Psoas muscle (tissue), 8 donors: ENCODE measurements at regions of chr6 and their contacts with region 1.

Region 1: DNA sequence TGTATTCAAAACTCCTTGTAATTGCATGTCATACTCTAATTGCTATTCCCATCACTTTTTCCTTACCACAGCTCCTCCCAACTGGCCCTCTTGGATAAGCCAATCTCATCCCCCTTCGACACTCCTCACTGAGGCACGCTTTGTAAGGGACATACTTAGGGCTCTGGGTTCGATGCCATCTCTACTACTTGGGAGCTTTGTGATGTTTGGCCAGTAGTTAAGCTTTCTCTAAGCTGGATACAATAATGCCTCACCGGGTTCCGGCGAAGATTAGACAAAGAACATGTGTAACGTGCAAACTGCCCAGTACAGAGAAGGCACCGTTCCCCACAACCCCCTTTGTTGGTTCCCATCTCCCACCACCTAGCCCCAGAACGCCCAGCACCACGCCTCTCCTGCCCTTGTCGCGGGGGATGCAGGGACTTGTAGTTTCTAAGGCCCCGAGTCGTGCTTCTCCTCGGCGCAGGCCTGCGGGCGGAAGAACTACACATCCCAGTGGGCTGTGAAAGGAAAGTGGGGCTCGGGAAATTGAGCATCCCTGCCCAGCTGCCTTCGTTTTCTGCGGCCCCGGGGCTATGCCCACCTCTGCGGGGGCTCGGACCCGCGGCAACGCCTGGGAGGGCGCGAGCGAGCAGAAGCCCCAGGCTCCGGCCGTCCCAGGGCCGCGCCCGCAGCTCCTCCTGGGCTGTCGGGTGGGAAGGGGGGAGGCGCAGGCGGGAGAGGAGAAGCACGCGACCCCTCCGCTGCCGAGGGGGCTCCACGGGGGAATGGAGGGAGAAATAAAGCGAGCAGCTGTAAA is 1.1 kb upstream of the ZDHHC14 start:
- DNase-seq: peak; percentile 91 to 93
- ATAC-seq: peak; percentile 82 to 91 (median 90)
- H3K4me3 ChIP-seq: peak overlapping the region; percentile 96
- H3K27ac ChIP-seq: peak overlapping the region; percentile 94
- H3K4me1 ChIP-seq: peaks cover 29% of the 10 kb centered on the region
- H3K27me3 ChIP-seq: no peaks in the 10 kb centered on the region
- CTCF ChIP-seq: no peak

Region 2: GRCh38 chr6:157323255-157323965 is 56.4 kb before region 1 on chr6 and contains the start of gene TMEM242:
- intact Hi-C with region 1: loop called (anchors 2 to 5 kb)
- DNase-seq: peak; percentile 92 to 95
- ATAC-seq: peak; percentile 92 to 96 (median 94)
- H3K4me3 ChIP-seq: peak within 1 kb of the TSS; percentile 78
- H3K27ac ChIP-seq: peak within 1 kb of the TSS; percentile 99
- H3K4me1 ChIP-seq: peaks cover 38% of the 10 kb centered on the region
- H3K27me3 ChIP-seq: no peaks in the 10 kb centered on the region
- CTCF ChIP-seq: peak; percentile 42
- total RNA-seq, gene TMEM242: 11.0 to 14.7 (median 13.6) TPM

Region 3: DNA sequence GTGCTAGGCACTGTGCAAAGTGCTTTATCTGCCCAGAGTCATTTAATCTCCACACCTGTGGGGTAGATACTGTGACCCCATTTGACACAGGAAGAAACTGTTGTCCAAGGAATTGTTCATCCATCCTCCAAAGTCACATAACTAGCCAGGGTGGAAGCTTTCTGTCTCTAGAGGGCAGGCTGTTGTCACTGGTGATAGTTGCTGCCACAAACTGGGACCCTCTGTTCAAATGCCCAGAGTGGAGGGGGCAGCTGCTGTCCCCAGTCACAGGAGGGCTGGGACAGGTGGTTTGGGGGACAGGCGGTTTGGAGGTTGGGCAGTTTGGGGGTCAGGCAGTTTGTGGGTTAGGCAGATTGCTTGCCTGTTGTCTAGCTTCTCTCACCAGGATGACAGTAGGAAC is 40.4 kb before region 1 on chr6:
- intact Hi-C with region 1: loop called in 1 of 2 experiments (anchors 5 kb)
- DNase-seq: no peak
- ATAC-seq: no peak
- H3K4me3 ChIP-seq: no peak overlapping the region
- H3K27ac ChIP-seq: no peak overlapping the region
- H3K4me1 ChIP-seq: no peaks in the 10 kb centered on the region
- H3K27me3 ChIP-seq: no peaks in the 10 kb centered on the region
- CTCF ChIP-seq: no peak

Region 4: GRCh38 chr6:157535339-157536222 is 155.7 kb after region 1 on chr6:
- intact Hi-C with region 1: loop called in 1 of 2 experiments (anchors 5 kb)
- DNase-seq: no peak
- ATAC-seq: no peak
- H3K4me3 ChIP-seq: no peak overlapping the region
- H3K27ac ChIP-seq: peak overlapping the region; percentile 20
- H3K4me1 ChIP-seq: peaks cover 65% of the 10 kb centered on the region
- H3K27me3 ChIP-seq: no peaks in the 10 kb centered on the region
- CTCF ChIP-seq: no peak

Region 5: DNA sequence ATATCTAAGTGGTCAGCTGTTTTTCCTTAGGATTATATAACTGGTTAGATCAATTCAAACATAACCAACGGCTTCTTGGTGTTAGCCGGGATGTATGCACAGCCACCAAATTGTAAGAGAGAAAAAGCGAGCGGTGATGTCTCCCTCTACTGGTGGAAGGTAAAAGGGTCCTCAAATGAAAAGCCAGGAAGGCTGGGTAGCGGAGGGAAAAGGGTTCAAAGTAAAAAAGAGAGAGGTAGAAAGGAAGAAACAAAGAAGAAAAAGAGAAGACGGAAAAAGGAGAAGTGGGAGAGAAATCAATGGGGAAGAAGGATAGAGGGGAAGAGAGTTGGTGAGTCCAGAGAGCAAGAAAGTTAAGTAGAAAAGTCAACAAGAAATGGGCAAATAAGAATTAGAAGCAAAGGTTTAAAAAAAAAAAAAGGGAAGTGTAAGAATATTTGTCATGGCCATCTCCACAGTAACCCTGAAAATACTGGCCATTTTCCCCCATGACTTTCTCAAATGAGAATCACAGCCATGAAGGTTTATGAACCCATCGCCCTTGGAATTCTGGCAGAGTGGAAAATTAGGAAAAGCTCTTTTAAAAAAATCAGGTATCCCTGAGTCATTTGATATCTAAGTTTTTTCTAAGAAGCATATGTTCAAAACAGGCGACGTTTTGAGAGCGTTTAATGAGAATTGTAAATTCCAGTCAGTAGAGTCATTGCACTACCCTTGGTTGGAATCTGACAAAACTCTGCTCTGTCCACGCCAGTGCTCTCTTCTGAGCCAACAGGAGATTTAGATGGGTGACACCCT is 287.6 kb after region 1 on chr6:
- intact Hi-C with region 1: loop called in 1 of 2 experiments (anchors 5 kb)
- DNase-seq: no peak
- ATAC-seq: peak in 3 of 4 donors; percentile 50 to 72 (median 60)
- H3K4me3 ChIP-seq: no peak overlapping the region
- H3K27ac ChIP-seq: no peak overlapping the region
- H3K4me1 ChIP-seq: peaks cover 28% of the 10 kb centered on the region
- H3K27me3 ChIP-seq: no peaks in the 10 kb centered on the region
- CTCF ChIP-seq: peak; percentile 86